ENCODE measurements at regions of chr17 and their contacts with region 1.

Region 1: DNA sequence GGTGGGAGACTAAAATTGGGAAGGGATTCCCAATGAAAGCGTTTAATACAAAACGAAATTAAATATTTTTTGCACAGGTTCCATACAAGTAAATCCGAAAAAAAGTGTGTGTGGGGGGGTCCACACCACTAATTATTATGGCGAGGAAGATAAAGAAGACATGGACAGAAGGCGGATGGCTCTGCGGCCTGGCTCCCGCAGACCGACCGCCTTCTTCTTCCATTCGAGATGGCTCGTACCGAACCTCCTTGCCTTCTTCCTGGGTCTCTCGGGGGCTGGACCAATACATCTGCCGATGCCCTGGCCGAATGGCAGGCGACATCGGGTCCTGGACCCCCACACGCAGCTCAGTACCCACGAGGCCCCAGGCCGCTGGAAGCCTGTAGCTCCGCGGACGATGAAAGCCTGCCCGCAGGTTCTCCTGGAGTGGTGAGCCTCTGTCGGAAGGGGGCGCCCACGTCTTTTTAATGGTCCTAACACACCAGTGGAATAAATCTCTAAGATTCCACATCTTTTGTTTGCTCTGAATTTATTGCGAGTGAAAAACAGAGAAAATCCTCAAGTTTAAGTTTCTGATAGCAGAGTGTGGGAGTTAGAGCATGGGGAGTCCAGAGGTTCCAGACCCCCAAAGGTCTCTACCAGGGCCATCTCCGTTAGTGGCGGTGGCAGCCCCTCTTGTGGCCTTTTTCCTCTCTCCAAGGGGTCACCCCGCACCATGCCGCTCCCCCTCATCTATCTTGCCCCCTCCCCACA is 1.4 kb downstream of the PRAC2 start:
- DNase-seq: peak; percentile 83
- H3K4me3 ChIP-seq: peak overlapping the region; percentile 21 to 42; a peak in 3 of 4 replicates
- H3K27ac ChIP-seq: no peak overlapping the region
- H3K4me1 ChIP-seq: no peaks in the 10 kb centered on the region
- H3K27me3 ChIP-seq: peaks cover 100% of the 10 kb centered on the region
- CTCF ChIP-seq: peak; percentile 97
- EP300 ChIP-seq: no peak
- RAD21 ChIP-seq: peak; percentile 82

Region 2: GRCh38 chr17:48678141-48678971 is 46.1 kb before region 1 on chr17:
- CTCF ChIA-PET with region 1: interaction called, 31 read pairs
- POLR2A ChIA-PET with region 1: no interaction called
- DNase-seq: peak; percentile 87
- H3K4me3 ChIP-seq: peak overlapping the region in 1 of 2 experiments; percentile 29; a peak in 1 of 4 replicates
- H3K27ac ChIP-seq: no peak overlapping the region
- H3K4me1 ChIP-seq: no peaks in the 10 kb centered on the region
- H3K27me3 ChIP-seq: peaks cover 96% of the 10 kb centered on the region
- CTCF ChIP-seq: peak; percentile 98
- EP300 ChIP-seq: no peak
- RAD21 ChIP-seq: peak; percentile 70

Region 3: GRCh38 chr17:48711102-48711501 is 13.3 kb before region 1 on chr17:
- CTCF ChIA-PET with region 1: interaction called, 49 read pairs
- POLR2A ChIA-PET with region 1: no interaction called
- DNase-seq: no peak
- H3K4me3 ChIP-seq: no peak overlapping the region
- H3K27ac ChIP-seq: no peak overlapping the region
- H3K4me1 ChIP-seq: no peaks in the 10 kb centered on the region
- H3K27me3 ChIP-seq: peaks cover 97% of the 10 kb centered on the region
- CTCF ChIP-seq: no peak
- EP300 ChIP-seq: no peak
- RAD21 ChIP-seq: no peak

Region 4: GRCh38 chr17:48747445-48748363 is 23.3 kb after region 1 on chr17:
- CTCF ChIA-PET with region 1: interaction called, 29 read pairs
- POLR2A ChIA-PET with region 1: interaction called, 3 read pairs
- DNase-seq: peak; percentile 49
- H3K4me3 ChIP-seq: no peak overlapping the region
- H3K27ac ChIP-seq: no peak overlapping the region
- H3K4me1 ChIP-seq: no peaks in the 10 kb centered on the region
- H3K27me3 ChIP-seq: peaks cover 98% of the 10 kb centered on the region
- CTCF ChIP-seq: no peak
- EP300 ChIP-seq: no peak
- RAD21 ChIP-seq: no peak

Region 5: DNA sequence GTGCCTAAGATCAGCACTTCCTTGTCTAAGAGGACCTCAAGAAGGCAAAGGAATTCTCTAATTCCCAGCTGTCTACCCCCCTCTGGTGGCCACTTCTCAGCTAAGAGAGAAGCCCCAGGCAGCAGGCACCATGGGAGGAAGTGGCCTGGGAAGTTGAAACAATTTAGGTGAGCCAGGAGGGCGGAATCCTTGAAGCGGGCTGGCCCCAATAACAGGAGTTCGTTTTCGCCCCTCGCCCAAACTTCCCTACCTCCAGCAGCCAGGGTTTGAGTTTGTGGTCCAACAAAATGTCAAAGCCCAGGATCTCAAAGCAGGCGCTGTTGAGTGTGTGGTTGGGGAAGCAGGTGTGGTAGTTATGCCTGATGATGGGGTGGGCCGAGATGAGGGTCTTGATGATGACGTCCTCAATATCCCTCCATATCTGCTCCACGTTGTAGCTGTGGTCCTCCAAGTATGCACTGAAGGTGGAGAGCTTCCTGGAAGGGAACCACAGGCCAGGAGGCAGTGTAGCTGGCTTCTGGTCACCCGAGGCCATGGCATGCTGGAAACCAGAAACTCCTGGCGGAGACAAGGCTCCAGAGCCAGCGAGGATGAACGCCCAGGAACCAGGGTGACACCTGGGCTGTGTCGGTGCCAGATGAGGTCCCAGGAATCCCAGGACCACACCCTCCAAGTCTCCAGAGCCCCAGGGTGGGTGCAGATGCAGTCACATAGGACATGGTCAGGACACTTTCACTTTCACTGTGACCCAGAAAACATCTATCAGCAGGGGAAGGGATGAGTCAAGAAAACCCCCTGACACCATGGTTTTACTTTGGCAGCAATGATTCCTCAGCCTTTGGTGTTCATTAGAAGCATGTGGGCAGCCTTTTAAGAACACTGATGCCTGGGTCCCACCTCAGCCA is 67.0 kb after region 1 on chr17:
- CTCF ChIA-PET with region 1: interaction called, 55 read pairs
- POLR2A ChIA-PET with region 1: no interaction called
- DNase-seq: peak; percentile 53
- H3K4me3 ChIP-seq: no peak overlapping the region; a peak in 1 of 4 replicates
- H3K27ac ChIP-seq: no peak overlapping the region
- H3K4me1 ChIP-seq: peaks cover 0 to 3% of the 10 kb centered on the region in 2 experiments; a peak in 1 of 4 replicates
- H3K27me3 ChIP-seq: peaks cover 44% of the 10 kb centered on the region
- CTCF ChIP-seq: peak; percentile 96
- EP300 ChIP-seq: no peak
- RAD21 ChIP-seq: peak; percentile 59

Region 6: DNA sequence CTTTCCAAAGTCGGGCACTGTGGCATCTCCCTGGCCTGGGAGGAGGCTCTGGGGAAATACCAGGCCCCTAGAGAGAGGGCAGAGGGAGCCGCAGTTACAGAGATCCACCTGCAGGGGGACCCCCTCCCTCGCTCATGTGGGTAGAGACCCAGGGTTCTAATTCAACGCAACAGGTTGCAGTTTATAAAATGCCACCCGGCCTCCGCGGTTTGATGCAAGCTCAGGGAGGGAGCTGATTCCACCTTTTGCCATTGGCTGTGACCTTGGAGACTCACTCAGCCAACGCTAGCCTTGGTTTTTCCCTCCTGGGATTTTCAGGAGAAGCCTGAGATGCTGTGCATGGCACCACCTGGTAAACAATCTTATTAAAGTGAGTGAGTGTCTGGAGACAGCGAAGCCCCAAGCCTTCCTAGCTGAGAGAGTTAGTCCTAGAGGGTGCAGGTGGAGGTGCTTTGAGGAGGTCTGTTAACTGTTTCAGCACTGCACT is 80.5 kb after region 1 on chr17:
- CTCF ChIA-PET with region 1: interaction called, 48 read pairs
- POLR2A ChIA-PET with region 1: no interaction called
- DNase-seq: peak; percentile 88
- H3K4me3 ChIP-seq: peak overlapping the region in 1 of 2 experiments; percentile 15; a peak in 1 of 4 replicates
- H3K27ac ChIP-seq: no peak overlapping the region
- H3K4me1 ChIP-seq: peaks cover 0 to 18% of the 10 kb centered on the region in 2 experiments; a peak in 2 of 4 replicates
- H3K27me3 ChIP-seq: peaks cover 29% of the 10 kb centered on the region
- CTCF ChIP-seq: peak; percentile 99
- EP300 ChIP-seq: no peak
- RAD21 ChIP-seq: peak; percentile 95

Region 7: DNA sequence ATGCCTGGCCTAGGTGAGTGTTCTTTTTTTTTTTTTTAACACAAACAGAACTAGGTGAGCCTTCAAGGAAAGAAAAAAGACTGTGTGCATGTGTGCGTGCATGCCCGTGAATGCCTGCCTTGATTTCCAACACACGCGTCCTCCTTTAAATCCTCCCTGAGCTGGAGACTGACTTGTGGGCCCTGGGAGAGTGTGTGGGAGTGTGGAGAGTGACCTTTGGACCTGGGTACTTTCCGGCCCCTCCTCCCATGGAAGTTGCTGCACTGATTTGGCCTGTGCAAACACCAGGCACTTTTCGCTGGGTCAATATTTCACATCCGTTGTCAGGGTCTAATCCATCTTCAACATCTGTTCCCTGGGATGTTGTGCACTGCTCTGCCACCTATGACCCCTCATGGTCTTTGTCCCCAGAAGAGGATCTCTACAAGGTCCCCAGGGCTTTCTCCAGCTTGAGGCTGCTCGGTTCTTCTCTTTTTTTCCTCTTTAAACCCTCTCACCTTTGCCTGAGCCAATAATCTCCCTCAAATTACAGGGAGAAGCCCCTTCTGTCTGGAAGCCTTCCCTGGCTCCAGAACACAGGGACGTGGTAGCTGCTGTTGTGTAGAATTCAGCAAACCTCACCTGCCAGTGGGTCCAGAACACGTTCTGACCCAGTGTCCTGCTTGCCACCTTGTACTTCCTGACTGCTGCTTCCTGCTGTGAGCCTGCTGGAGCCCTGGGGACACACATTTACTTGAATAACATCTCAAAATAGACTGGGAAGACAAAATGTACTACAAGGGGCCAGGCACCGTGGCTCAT is 147.3 kb after region 1 on chr17:
- CTCF ChIA-PET with region 1: interaction called, 328 read pairs
- POLR2A ChIA-PET with region 1: no interaction called
- DNase-seq: no peak
- H3K4me3 ChIP-seq: no peak overlapping the region
- H3K27ac ChIP-seq: no peak overlapping the region
- H3K4me1 ChIP-seq: no peaks in the 10 kb centered on the region; a peak in 1 of 4 replicates
- H3K27me3 ChIP-seq: peaks cover 2% of the 10 kb centered on the region; the same call in 1 of the 2 replicates
- CTCF ChIP-seq: no peak
- EP300 ChIP-seq: no peak
- RAD21 ChIP-seq: no peak